PC-3 (cell line): ENCODE measurements at regions of chr11 and their contacts with region 1.

Region 1: GRCh38 chr11:66891851-66892660 is 35.2 kb downstream of the LRFN4 start:
- DNase-seq: peak; percentile 99
- ATAC-seq: peak; percentile 99
- H3K4me3 ChIP-seq: peak overlapping the region; percentile 23; the same call in 1 of the 2 replicates
- H3K27ac ChIP-seq: peak overlapping the region; percentile 78
- H3K4me1 ChIP-seq: peaks cover 24% of the 10 kb centered on the region
- H3K27me3 ChIP-seq: no peaks in the 10 kb centered on the region
- CTCF ChIP-seq: peak; percentile 33; the same call in 1 of the 2 replicates

Region 2: DNA sequence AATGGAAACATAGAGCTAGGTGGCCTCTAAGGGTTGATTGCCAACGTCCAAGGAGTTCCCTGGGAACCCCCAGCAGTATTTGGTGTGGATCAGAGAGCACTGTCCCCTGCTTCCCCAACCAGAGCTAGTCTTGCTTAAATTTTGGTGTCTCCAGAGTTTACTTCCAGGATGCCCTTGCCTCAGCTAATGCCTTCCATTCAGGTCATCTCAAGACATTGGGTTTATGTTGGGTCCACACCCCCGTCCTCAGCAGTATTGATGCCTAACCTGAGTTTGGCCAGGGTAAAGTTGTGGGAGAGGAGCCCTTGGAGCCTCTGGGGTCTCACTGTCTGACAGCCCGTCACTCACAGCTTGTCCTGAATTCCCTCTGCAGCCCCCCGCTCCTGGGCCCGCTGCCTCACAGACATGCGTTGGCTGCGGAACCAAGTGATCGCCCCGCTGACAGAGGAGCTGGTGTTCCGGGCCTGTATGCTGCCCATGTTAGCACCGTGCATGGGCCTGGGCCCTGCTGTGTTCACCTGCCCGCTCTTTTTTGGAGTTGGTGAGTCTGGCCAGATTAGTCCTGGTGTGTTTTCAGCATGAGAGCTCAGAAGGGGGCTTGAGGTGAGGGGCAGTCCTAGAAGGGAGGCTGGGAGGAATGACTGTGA is 47.4 kb before region 1 on chr11:
- CTCF ChIA-PET with region 1: interaction called, 11 read pairs
- POLR2A ChIA-PET with region 1: no interaction called
- intact Hi-C with region 1: no loop called
- DNase-seq: no peak
- ATAC-seq: no peak
- H3K4me3 ChIP-seq: peak overlapping the region; percentile 96
- H3K27ac ChIP-seq: no peak overlapping the region
- H3K4me1 ChIP-seq: peaks cover 35% of the 10 kb centered on the region
- H3K27me3 ChIP-seq: no peaks in the 10 kb centered on the region
- CTCF ChIP-seq: no peak

Region 3: DNA sequence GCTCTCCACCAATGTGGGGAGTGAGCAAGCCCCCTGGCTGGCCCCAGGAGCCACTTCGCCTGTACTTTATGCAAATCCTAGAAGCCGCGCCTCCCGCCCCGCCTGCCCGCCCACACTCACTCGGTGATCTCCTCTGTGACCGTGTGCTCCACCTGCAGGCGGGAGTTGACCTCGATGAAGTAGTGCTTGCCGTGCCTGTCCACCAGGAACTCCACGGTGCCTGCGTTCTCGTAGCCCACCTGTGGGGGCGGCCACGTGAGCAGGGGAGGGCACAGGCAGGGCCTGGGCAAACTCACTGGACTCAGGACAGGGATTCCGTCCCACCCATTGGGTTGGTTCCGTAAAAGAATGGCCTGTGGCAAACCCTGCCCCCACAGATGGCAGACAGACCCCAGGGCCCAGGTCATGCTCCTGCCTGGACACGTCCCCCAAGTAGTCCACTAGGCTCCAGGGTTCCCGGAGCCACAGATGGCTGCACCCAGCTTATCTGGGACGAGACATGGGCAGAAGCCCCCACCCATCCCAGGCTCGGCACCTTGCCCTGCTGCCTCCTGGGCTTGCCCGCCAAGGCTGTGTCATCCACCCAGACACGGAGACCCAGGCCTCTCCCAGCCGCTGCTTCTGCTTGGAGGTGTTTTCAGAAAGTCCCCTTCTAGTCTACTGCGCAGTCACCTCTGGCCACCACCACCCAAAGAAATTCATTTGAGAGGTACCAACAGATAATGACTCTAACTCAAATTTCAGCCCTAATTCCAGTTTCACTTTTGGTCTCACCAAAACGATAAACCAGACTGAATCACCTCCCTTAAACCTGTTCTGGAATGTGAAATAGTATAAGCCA is 23.1 kb before region 1 on chr11:
- CTCF ChIA-PET with region 1: no interaction called
- POLR2A ChIA-PET with region 1: no interaction called
- intact Hi-C with region 1: no loop called
- DNase-seq: peak; percentile 87
- ATAC-seq: peak; percentile 96
- H3K4me3 ChIP-seq: no peak overlapping the region
- H3K27ac ChIP-seq: no peak overlapping the region
- H3K4me1 ChIP-seq: peaks cover 7% of the 10 kb centered on the region
- H3K27me3 ChIP-seq: no peaks in the 10 kb centered on the region
- CTCF ChIP-seq: peak; percentile 82

Region 4: GRCh38 chr11:66910669-66911068 is 18.6 kb after region 1 on chr11:
- CTCF ChIA-PET with region 1: no interaction called
- POLR2A ChIA-PET with region 1: interaction called, 10 read pairs
- intact Hi-C with region 1: no loop called
- DNase-seq: no peak
- ATAC-seq: no peak
- H3K4me3 ChIP-seq: no peak overlapping the region
- H3K27ac ChIP-seq: no peak overlapping the region
- H3K4me1 ChIP-seq: peaks cover 12% of the 10 kb centered on the region
- H3K27me3 ChIP-seq: no peaks in the 10 kb centered on the region
- CTCF ChIP-seq: no peak

Region 5: GRCh38 chr11:66970808-66971442 is 78.9 kb after region 1 on chr11:
- CTCF ChIA-PET with region 1: no interaction called
- POLR2A ChIA-PET with region 1: no interaction called
- intact Hi-C with region 1: loop called (anchors 5 kb)
- DNase-seq: peak; percentile 99
- ATAC-seq: peak; percentile 91
- H3K4me3 ChIP-seq: peak overlapping the region; percentile 13; the same call in 1 of the 2 replicates
- H3K27ac ChIP-seq: peak overlapping the region; percentile 94
- H3K4me1 ChIP-seq: peaks cover 44% of the 10 kb centered on the region
- H3K27me3 ChIP-seq: no peaks in the 10 kb centered on the region
- CTCF ChIP-seq: no peak

Region 6: DNA sequence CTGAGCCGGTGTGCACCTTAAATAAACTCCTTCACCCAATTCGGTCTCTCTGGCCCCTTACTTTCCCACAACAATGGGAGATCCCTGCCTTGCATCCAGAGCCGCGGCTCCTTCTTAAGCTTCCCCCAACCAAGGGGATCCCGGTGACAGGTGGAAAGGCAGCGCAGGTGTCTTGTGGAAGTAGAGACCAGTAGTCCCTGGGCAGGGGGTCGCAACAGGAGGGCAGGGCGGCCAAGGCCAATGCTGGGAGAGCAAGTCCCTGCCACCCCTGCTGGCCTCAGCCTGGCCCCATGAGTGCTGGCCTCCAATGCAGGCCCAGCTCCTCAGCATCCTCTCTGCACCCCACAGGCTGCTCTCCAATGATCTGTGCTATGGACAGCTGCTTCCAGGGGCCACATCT is 123.0 kb after region 1 on chr11:
- CTCF ChIA-PET with region 1: no interaction called
- POLR2A ChIA-PET with region 1: no interaction called
- intact Hi-C with region 1: no loop called
- DNase-seq: no peak
- ATAC-seq: no peak
- H3K4me3 ChIP-seq: no peak overlapping the region
- H3K27ac ChIP-seq: no peak overlapping the region
- H3K4me1 ChIP-seq: no peaks in the 10 kb centered on the region
- H3K27me3 ChIP-seq: no peaks in the 10 kb centered on the region
- CTCF ChIP-seq: no peak